ENCODE measurements at regions of chr17 and their contacts with region 1.

Region 1: GRCh38 chr17:28973425-28973824 is 22.1 kb upstream of the PHF12 start:
- DNase-seq: no peak
- ATAC-seq: peak in 1 of 2 experiments; percentile 26; a peak in 1 of 6 replicates
- H3K4me3 ChIP-seq: no peak overlapping the region
- H3K27ac ChIP-seq: no peak overlapping the region
- H3K4me1 ChIP-seq: no peaks in the 10 kb centered on the region
- CTCF ChIP-seq: no peak
- EP300 ChIP-seq: no peak
- POLR2A ChIP-seq: no peak
- RAD21 ChIP-seq: no peak

Region 2: DNA sequence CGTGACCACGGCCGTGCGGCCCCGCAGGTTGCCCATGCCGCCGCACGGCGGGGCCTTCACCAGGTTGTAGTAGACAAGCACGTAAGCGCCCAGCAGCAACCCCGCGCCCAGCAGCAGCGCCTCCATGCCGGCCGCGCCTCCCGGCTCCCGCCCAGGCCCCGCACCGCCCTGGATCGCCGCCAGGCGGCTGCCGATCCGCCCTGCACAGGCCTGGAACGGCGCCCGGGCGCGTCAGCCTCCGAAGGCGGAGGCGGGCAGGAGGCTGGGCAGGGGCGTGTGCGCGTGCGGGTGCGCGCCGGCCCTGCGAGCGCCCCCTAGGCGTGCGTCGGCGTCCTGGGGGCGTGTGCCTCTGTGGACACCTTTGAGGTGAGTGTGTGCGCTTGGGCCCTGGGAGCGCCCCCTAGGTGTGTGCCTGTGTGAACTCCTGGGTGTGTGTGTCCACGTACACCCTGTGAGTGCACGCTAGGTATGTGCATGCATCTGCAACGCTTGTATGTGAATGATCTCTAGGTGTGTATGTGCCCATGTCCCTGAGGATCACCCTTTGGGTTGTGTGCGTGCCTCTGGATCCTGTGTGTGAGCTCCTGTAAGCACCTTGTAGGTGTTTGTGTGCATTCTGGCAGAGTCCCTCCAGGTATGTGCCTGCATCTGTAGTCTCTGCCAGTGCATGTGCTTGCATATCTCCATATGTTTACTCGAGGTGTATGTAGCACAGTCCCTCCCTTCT is 70.4 kb before region 1 on chr17 and contains the start of gene DHRS13:
- CTCF ChIA-PET with region 1: no interaction called
- POLR2A ChIA-PET with region 1: no interaction called
- DNase-seq: peak; percentile 97
- ATAC-seq: peak; percentile 91 to 94
- H3K4me3 ChIP-seq: peak within 1 kb of the TSS; percentile 87
- H3K27ac ChIP-seq: peak within 1 kb of the TSS; percentile 76 to 84
- H3K4me1 ChIP-seq: peaks cover 10% of the 10 kb centered on the region
- CTCF ChIP-seq: peak; percentile 100
- EP300 ChIP-seq: no peak
- POLR2A ChIP-seq: no peak
- RAD21 ChIP-seq: peak; percentile 63 to 70
- polyA plus RNA-seq, gene DHRS13: 7.0 and 7.3 TPM in 2 replicates

Region 3: GRCh38 chr17:28992625-28993600 is 19.5 kb after region 1 on chr17:
- CTCF ChIA-PET with region 1: interaction called, 10 read pairs
- POLR2A ChIA-PET with region 1: no interaction called
- DNase-seq: peak in 1 of 2 experiments; percentile 32
- ATAC-seq: peak; percentile 53 to 68; a peak in 5 of 6 replicates
- H3K4me3 ChIP-seq: no peak overlapping the region
- H3K27ac ChIP-seq: no peak overlapping the region
- H3K4me1 ChIP-seq: no peaks in the 10 kb centered on the region
- CTCF ChIP-seq: no peak
- EP300 ChIP-seq: no peak
- POLR2A ChIP-seq: no peak
- RAD21 ChIP-seq: no peak

Region 4: GRCh38 chr17:29031488-29031887 is 58.1 kb after region 1 on chr17:
- CTCF ChIA-PET with region 1: no interaction called
- POLR2A ChIA-PET with region 1: no interaction called
- DNase-seq: no peak
- ATAC-seq: no peak
- H3K4me3 ChIP-seq: no peak overlapping the region
- H3K27ac ChIP-seq: no peak overlapping the region
- H3K4me1 ChIP-seq: no peaks in the 10 kb centered on the region
- CTCF ChIP-seq: no peak
- EP300 ChIP-seq: no peak
- POLR2A ChIP-seq: no peak
- RAD21 ChIP-seq: no peak